Activated naive CD4-positive, alpha-beta T cell treated with anti-CD3 and anti-CD28 coated beads for 36 hours (primary cell): ENCODE measurements at regions of chr2 and their contacts with region 1.

Region 1: DNA sequence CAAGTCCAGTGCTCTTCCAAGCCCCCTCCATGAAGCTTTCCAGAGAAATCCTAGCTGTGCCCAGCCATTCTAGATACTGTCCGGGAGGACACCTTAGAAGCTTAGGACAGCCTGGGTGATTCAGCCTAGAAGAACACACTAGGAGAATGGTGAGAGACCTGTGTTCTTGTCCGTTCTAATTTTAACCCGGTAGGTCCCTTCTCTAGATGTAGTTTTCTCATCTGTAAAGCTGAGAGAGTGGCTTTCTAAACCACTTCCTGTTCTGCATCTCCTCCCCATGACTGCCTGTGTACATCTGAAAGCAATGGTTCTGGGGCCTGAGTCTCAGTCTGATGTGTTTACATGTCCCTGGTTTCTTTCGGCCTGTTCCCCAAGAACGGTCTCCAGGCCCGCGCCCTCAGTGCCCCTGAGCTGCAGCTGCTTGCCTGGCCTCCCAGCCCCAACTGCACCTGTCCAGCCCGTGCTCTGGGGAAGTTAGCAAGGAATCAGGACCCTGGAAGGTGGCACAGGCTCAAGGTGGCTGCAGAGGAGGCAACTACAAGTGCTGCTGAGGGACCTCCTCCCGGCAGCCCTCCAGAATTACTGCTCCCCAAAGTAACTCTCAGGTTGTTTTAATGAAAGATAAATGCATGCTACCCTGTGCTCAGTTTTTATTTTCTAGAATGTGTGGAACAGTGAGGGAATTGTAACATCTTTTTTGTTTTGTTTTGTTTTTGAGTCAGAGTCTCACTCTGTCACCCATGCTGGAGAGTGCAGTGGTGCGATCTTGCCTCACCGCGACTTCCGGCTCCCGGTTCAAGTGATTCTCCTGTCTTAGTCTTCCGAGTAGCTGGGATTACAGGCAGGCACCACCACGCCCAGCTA is 105.9 kb downstream of the LBH start:
- DNase-seq: peak; percentile 85
- H3K4me3 Mint-ChIP-seq: peak overlapping the region; percentile 58
- H3K27ac Mint-ChIP-seq: peak overlapping the region; percentile 92
- H3K4me1 Mint-ChIP-seq: peaks cover 77% of the 10 kb centered on the region
- H3K27me3 Mint-ChIP-seq: no peaks in the 10 kb centered on the region

Region 2: GRCh38 chr2:30139131-30139870 is 197.9 kb before region 1 on chr2:
- CTCF ChIA-PET with region 1: no interaction called
- intact Hi-C with region 1: no loop called
- DNase-seq: peak; percentile 82
- H3K4me3 Mint-ChIP-seq: peak overlapping the region; percentile 51
- H3K27ac Mint-ChIP-seq: peak overlapping the region; percentile 79
- H3K4me1 Mint-ChIP-seq: peaks cover 27% of the 10 kb centered on the region
- H3K27me3 Mint-ChIP-seq: no peaks in the 10 kb centered on the region

Region 3: GRCh38 chr2:30208452-30208851 is 128.8 kb before region 1 on chr2:
- CTCF ChIA-PET with region 1: interaction called, 18 read pairs
- intact Hi-C with region 1: loop called (anchors 1 kb)
- DNase-seq: peak; percentile 51
- H3K4me3 Mint-ChIP-seq: no peak overlapping the region
- H3K27ac Mint-ChIP-seq: no peak overlapping the region
- H3K4me1 Mint-ChIP-seq: peaks cover 15% of the 10 kb centered on the region
- H3K27me3 Mint-ChIP-seq: no peaks in the 10 kb centered on the region

Region 4: DNA sequence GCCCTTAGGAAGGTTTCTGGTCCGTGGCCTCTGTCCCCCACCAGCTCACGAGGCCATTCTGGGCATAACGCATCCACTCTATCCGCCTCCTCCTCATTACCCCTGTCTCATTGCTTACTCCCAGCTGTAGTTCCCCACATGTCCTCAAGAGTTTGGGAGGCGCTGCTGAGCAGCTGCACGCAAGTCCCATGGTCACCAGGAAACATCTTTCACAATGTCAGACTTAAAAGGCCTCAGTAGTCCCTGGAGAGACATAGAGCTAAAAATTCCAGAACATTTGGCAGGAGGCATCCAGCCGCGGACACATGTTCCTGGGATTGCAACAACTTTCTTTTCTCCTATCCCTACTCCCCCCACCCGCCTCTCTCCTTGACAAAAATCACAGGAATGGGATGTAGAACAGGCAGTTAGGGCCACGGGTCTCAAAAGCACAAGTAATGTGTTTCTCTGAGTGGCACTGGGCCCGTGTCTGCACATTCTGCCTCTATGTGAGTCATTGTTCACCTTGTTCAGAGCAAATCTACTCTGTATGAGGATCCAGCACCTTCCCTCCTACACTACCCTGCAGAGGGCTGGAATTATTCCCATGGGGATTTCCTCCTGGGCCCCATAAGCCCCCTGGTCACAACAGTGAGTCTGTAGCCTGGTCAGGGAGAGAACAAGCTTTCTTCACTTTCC is 97.8 kb before region 1 on chr2:
- CTCF ChIA-PET with region 1: interaction called, 15 read pairs
- intact Hi-C with region 1: loop called (anchors 1 kb)
- DNase-seq: peak; percentile 86
- H3K4me3 Mint-ChIP-seq: peak overlapping the region; percentile 45
- H3K27ac Mint-ChIP-seq: peak overlapping the region; percentile 79
- H3K4me1 Mint-ChIP-seq: peaks cover 93% of the 10 kb centered on the region
- H3K27me3 Mint-ChIP-seq: no peaks in the 10 kb centered on the region

Region 5: DNA sequence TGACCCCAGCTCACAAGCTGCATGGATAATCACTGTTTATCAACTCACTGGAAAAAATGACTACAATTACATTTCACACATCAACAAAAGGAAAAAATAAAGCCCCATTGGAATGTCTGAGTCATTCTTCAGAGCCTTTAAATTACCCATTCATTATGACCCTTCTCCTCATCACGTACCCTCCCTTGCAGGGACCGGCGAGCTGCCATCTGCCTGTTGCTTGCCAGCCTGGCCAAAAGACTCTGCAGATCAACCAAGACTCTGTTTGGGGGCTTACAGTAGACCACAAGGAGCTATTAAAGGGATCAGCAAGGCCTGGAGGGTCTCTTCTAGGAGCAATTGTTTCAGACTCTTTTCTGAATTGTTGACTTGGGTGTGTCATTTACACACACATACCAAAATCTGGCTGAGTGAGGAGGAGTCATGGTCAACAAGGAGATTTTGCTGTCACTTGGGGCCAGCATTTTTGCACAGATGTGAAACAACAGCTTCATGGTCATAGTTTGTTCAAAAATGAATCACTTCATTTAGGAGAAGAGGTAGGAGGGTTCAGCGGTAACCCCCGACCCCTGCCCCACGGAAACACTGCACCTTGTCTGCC is 63.8 kb before region 1 on chr2:
- CTCF ChIA-PET with region 1: interaction called, 7 read pairs
- intact Hi-C with region 1: loop called (anchors 1 kb)
- DNase-seq: peak; percentile 60
- H3K4me3 Mint-ChIP-seq: no peak overlapping the region
- H3K27ac Mint-ChIP-seq: peak overlapping the region; percentile 68
- H3K4me1 Mint-ChIP-seq: peaks cover 78% of the 10 kb centered on the region
- H3K27me3 Mint-ChIP-seq: no peaks in the 10 kb centered on the region

Region 6: GRCh38 chr2:30410217-30410616 is 73.0 kb after region 1 on chr2:
- CTCF ChIA-PET with region 1: interaction called, 4 read pairs
- intact Hi-C with region 1: loop called (anchors 1 kb)
- DNase-seq: peak; percentile 58
- H3K4me3 Mint-ChIP-seq: no peak overlapping the region
- H3K27ac Mint-ChIP-seq: peak overlapping the region; percentile 73
- H3K4me1 Mint-ChIP-seq: peaks cover 45% of the 10 kb centered on the region
- H3K27me3 Mint-ChIP-seq: no peaks in the 10 kb centered on the region

Region 7: GRCh38 chr2:30475542-30475941 is 138.3 kb after region 1 on chr2:
- CTCF ChIA-PET with region 1: interaction called, 5 read pairs
- intact Hi-C with region 1: loop called (anchors 2 kb)
- DNase-seq: no peak
- H3K4me3 Mint-ChIP-seq: no peak overlapping the region
- H3K27ac Mint-ChIP-seq: no peak overlapping the region
- H3K4me1 Mint-ChIP-seq: peaks cover 33% of the 10 kb centered on the region
- H3K27me3 Mint-ChIP-seq: no peaks in the 10 kb centered on the region

Region 8: GRCh38 chr2:30565851-30566358 is 228.7 kb after region 1 on chr2:
- CTCF ChIA-PET with region 1: no interaction called
- intact Hi-C with region 1: no loop called
- DNase-seq: no peak
- H3K4me3 Mint-ChIP-seq: no peak overlapping the region
- H3K27ac Mint-ChIP-seq: no peak overlapping the region
- H3K4me1 Mint-ChIP-seq: peaks cover 3% of the 10 kb centered on the region
- H3K27me3 Mint-ChIP-seq: no peaks in the 10 kb centered on the region